ENCODE measurements at regions of chr2 and their contacts with region 1.

Region 1: GRCh38 chr2:75403991-75404428 is 156.7 kb downstream of the EVA1A start:
- DNase-seq: no peak
- H3K4me3 ChIP-seq: no peak overlapping the region
- H3K27ac ChIP-seq: no peak overlapping the region
- H3K4me1 ChIP-seq: no peaks in the 10 kb centered on the region
- H3K27me3 ChIP-seq: no peaks in the 10 kb centered on the region
- CTCF ChIP-seq: peak; percentile 96

Region 2: DNA sequence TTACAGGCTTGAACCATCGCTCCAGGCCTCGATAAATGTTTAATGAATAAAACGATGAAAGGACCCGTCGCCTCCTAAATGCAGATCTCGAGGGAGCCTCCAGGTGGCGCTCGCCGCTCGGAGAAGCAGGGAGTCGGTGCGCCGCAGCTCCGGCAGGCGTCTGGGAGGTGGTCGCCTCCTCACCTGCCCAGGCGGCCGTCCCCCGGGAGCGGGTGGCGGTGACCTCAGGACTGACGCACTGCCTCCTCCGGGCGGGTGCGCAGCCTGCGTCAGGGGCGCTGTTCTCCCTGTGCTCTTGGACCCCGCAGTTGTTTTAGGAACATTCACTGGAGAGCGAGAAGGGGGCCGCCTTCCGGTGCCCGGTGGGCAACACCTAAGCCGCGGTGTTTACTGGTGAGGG is 484.2 kb before region 1 on chr2:
- CTCF ChIA-PET with region 1: no interaction called
- POLR2A ChIA-PET with region 1: no interaction called
- intact Hi-C with region 1: loop called (anchors 5 kb)
- DNase-seq: peak; percentile 42 to 64
- H3K4me3 ChIP-seq: peak overlapping the region; percentile 60
- H3K27ac ChIP-seq: no peak overlapping the region
- H3K4me1 ChIP-seq: peaks cover 30% of the 10 kb centered on the region
- H3K27me3 ChIP-seq: no peaks in the 10 kb centered on the region
- CTCF ChIP-seq: peak; percentile 89

Region 3: GRCh38 chr2:75064691-75065396 is 339.2 kb before region 1 on chr2:
- CTCF ChIA-PET with region 1: no interaction called
- POLR2A ChIA-PET with region 1: no interaction called
- intact Hi-C with region 1: loop called (anchors 2 kb)
- DNase-seq: peak; percentile 55
- H3K4me3 ChIP-seq: no peak overlapping the region
- H3K27ac ChIP-seq: no peak overlapping the region
- H3K4me1 ChIP-seq: no peaks in the 10 kb centered on the region
- H3K27me3 ChIP-seq: no peaks in the 10 kb centered on the region
- CTCF ChIP-seq: peak; percentile 94

Region 4: GRCh38 chr2:75157430-75157829 is 246.6 kb before region 1 on chr2:
- CTCF ChIA-PET with region 1: no interaction called
- POLR2A ChIA-PET with region 1: no interaction called
- intact Hi-C with region 1: loop called (anchors 1 kb)
- DNase-seq: peak; percentile 10 to 58
- H3K4me3 ChIP-seq: no peak overlapping the region
- H3K27ac ChIP-seq: no peak overlapping the region
- H3K4me1 ChIP-seq: peaks cover 39% of the 10 kb centered on the region
- H3K27me3 ChIP-seq: no peaks in the 10 kb centered on the region
- CTCF ChIP-seq: peak; percentile 68

Region 5: GRCh38 chr2:75173740-75174139 is 230.3 kb before region 1 on chr2:
- CTCF ChIA-PET with region 1: no interaction called
- POLR2A ChIA-PET with region 1: no interaction called
- intact Hi-C with region 1: no loop called
- DNase-seq: no peak
- H3K4me3 ChIP-seq: no peak overlapping the region
- H3K27ac ChIP-seq: no peak overlapping the region
- H3K4me1 ChIP-seq: no peaks in the 10 kb centered on the region
- H3K27me3 ChIP-seq: no peaks in the 10 kb centered on the region
- CTCF ChIP-seq: no peak

Region 6: GRCh38 chr2:75466708-75467311 is 62.8 kb after region 1 on chr2:
- CTCF ChIA-PET with region 1: no interaction called
- POLR2A ChIA-PET with region 1: no interaction called
- intact Hi-C with region 1: loop called (anchors 5 kb)
- DNase-seq: peak in 1 of 2 experiments; percentile 33
- H3K4me3 ChIP-seq: no peak overlapping the region
- H3K27ac ChIP-seq: no peak overlapping the region
- H3K4me1 ChIP-seq: peaks cover 14% of the 10 kb centered on the region; the same call in 1 of the 2 replicates
- H3K27me3 ChIP-seq: no peaks in the 10 kb centered on the region
- CTCF ChIP-seq: peak; percentile 73